Sigmoid colon (tissue), 7 donors: ENCODE measurements at regions of chr12 and their contacts with region 1.

Region 1: DNA sequence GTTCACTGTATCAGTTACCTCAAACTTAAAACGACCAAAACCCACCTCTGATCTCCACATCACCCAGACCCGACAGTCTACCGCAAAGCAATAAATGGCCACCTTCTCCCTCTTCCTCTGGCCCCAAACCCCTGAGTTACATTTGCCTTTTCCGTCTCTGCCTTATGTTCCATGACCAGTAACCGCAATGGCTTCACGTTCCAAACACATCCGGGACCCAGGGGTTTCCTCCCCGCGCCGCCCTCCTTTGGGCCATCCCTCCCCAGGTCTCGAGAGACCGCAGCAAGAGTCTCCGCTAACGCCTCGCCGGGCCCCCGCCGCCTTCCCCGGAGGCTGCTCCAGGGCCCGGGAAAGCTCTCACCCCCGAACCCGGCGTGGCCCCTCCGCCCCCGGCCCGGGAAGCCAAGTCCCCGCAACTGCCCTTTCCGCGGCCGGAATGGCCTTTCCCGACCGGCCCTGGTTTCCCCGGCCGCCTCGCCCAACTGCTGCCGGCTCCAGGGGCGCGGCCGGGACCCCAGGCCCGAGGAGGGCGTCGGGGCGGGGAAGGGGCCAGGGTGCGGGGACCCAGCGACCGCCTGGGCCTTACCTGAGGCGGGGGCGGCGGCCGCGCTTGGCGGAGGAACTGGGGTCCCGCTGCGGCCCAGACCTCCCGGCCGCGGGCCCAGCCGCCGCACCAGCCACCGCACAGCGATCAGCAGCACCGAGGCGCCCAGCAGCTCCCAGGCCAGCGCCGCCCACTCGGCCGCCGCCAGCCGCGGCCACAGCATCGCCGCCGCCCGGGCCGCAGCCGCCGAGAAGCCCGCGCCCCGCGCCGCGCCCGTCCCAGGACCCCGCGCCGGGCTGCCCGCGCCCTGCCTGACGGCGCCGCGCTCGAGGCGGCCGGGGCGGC is at the start of gene ANKLE2:
- DNase-seq: peak; percentile 78
- H3K4me3 ChIP-seq: peak within 1 kb of the TSS; percentile 80 to 100 (median 94)
- H3K27ac ChIP-seq: peak within 1 kb of the TSS; percentile 90 to 99 (median 96)
- H3K4me1 ChIP-seq: peaks cover 0 to 30% (median 27%) of the 10 kb centered on the region in 4 donors
- H3K27me3 ChIP-seq: no peaks in the 10 kb centered on the region
- CTCF ChIP-seq: no peak
- EP300 ChIP-seq: no peak
- POLR2A ChIP-seq: no peak
- total RNA-seq, gene ANKLE2: 32.9 to 58.4 (median 38.3) TPM

Region 2: DNA sequence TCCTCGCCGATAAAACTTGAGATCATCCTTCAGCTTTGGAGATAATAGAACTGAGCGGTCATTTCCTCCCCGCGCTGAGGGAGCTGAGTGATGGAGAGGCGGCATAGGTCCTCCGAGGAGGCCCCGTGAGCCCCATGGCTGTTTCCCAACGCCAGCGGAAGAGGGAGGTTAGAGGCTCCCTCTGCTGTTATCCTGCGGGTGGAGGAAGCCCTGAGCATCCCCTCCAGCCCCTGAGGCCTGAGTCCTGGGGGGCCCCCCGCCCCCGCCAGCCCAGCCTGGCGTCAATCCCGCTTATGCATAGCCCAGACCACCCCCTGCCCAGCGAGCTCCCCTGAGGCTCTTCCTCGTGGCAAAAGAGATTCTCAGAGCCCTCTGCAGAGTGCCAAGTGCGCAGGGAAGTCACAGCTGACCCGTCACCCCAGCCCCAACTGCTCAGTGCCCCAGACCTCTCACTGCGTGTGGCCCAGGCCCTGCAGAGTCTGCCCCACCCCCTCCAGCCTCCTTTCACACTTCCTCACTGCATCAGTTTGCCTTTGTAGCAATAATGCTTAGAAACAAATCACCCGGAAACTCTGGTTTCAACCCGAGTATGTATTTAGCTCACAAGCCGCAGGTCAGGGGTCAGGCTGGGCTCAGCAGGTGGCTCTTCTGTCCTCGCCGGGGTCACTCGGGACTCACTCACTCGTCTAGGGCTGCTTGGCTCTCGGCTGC is 387.2 kb before region 1 on chr12:
- intact Hi-C with region 1: no loop called
- DNase-seq: peak; percentile 75
- H3K4me3 ChIP-seq: no peak overlapping the region
- H3K27ac ChIP-seq: no peak overlapping the region
- H3K4me1 ChIP-seq: no peaks in the 10 kb centered on the region
- H3K27me3 ChIP-seq: peaks cover 25 to 84% (median 76%) of the 10 kb centered on the region in 3 donors
- CTCF ChIP-seq: peak in 1 of 4 experiments; percentile 33
- EP300 ChIP-seq: no peak
- POLR2A ChIP-seq: no peak

Region 3: DNA sequence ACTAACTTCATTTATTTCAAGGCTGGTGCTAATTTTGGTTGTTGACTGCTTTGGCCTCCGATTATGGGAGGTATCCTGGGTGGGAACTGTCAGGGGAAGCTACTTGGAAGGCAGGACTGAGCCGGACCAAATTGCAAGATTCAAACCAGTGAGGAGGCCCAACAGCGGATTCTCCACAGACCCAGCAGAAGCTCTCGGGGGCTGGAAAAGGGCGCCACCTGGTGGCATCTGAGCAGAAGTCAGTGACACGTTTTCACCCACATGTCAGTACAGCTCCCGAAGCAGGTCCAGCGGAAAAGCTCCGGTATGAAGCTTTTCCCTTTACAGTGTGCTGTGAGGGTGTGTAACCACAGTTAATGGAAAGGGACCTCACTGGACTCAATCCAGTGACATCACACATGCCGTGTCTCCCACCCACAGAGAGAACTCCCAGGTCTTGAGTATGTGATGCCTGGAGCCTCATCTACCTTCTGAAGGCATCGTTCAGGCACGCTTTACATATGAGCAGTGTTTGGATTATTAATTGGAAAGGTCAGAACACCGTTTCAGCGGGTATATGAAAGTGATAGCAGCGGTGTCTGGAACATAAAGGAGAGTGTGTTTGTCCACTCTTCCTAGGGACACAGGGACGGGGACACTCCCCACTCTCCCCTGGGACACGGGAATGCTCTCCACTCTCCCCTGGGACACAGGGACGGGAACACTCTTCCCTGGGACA is 146.3 kb before region 1 on chr12:
- intact Hi-C with region 1: no loop called
- DNase-seq: peak; percentile 91
- H3K4me3 ChIP-seq: no peak overlapping the region
- H3K27ac ChIP-seq: no peak overlapping the region
- H3K4me1 ChIP-seq: peaks cover 0 to 17% (median 11%) of the 10 kb centered on the region in 4 donors
- H3K27me3 ChIP-seq: peaks cover 40 to 68% (median 57%) of the 10 kb centered on the region in 3 donors
- CTCF ChIP-seq: peak; percentile 60 to 88 (median 84)
- EP300 ChIP-seq: no peak
- POLR2A ChIP-seq: no peak

Region 4: DNA sequence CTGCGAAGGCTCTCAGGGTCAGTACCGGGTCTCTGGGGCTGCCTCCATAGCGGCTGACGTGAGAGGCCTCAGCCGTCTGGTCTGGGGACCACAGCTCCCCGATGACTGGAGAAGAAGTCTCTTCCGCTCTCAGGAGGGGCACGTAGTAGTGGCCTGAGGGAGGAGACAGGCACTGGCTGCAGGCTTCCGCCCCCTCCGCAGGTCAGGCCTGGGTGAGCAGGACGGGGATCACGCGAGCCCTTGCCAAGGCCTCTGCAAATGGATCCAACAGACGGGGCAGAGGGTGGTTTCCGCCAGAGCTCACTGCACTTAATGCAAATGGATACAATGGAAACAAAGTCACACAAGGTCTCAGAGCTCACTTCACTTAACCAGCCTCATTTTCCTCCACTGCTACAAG is 24.4 kb before region 1 on chr12:
- intact Hi-C with region 1: no loop called
- DNase-seq: no peak
- H3K4me3 ChIP-seq: no peak overlapping the region
- H3K27ac ChIP-seq: no peak overlapping the region
- H3K4me1 ChIP-seq: no peaks in the 10 kb centered on the region
- H3K27me3 ChIP-seq: no peaks in the 10 kb centered on the region
- CTCF ChIP-seq: no peak
- EP300 ChIP-seq: no peak
- POLR2A ChIP-seq: no peak

Region 5: GRCh38 chr12:132828706-132829534 is 67.6 kb after region 1 on chr12 and contains the start of gene GOLGA3:
- intact Hi-C with region 1: loop called (anchors 5 kb)
- DNase-seq: peak; percentile 96
- H3K4me3 ChIP-seq: peak within 1 kb of the TSS; percentile 67 to 98 (median 86)
- H3K27ac ChIP-seq: peak within 1 kb of the TSS; percentile 89 to 98 (median 92)
- H3K4me1 ChIP-seq: peaks cover 0 to 34% (median 21%) of the 10 kb centered on the region in 4 donors
- H3K27me3 ChIP-seq: no peaks in the 10 kb centered on the region
- CTCF ChIP-seq: no peak
- EP300 ChIP-seq: peak in 1 of 4 donors; percentile 31
- POLR2A ChIP-seq: peak in 1 of 2 donors; percentile 19
- total RNA-seq, gene GOLGA3: 45.7 to 78.4 (median 56.2) TPM